Ovary (tissue), 10 donors: ENCODE measurements at regions of chr3 and their contacts with region 1.

Region 1: GRCh38 chr3:133040696-133041523 is 2.7 kb downstream of the TMEM108 start:
- DNase-seq: peak in 4 of 5 donors; percentile 9 to 40 (median 36)
- H3K4me3 ChIP-seq: no peak overlapping the region
- H3K27ac ChIP-seq: no peak overlapping the region
- H3K4me1 ChIP-seq: no peaks in the 10 kb centered on the region
- H3K27me3 ChIP-seq: no peaks in the 10 kb centered on the region
- CTCF ChIP-seq: peak in 1 of 3 donors; percentile 17
- EP300 ChIP-seq: no peak
- POLR2A ChIP-seq: no peak

Region 2: DNA sequence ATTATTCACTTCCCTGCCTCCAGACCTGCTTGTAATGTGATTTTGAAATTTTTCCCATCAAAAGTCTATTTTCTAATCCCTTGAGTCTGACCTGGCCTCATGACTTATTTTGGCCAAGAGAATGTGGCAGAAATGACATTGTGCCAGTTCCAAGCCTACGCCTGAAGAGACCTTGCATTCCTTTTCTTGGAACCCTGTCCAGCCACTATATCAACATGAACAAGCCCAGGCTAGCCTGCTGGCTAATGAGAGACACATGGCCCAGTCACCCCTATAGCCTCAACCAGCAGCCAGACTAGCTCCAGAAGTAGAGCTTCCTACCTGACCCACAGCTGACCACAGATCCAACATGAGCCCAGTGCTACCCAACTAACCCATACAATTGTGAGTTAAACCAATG is 844.8 kb before region 1 on chr3:
- intact Hi-C with region 1: no loop called
- DNase-seq: no peak
- H3K4me3 ChIP-seq: no peak overlapping the region
- H3K27ac ChIP-seq: no peak overlapping the region
- H3K4me1 ChIP-seq: no peaks in the 10 kb centered on the region
- H3K27me3 ChIP-seq: no peaks in the 10 kb centered on the region
- CTCF ChIP-seq: no peak
- EP300 ChIP-seq: no peak
- POLR2A ChIP-seq: no peak

Region 3: GRCh38 chr3:132800958-132801357 is 240.0 kb before region 1 on chr3:
- intact Hi-C with region 1: no loop called
- DNase-seq: no peak
- H3K4me3 ChIP-seq: no peak overlapping the region
- H3K27ac ChIP-seq: no peak overlapping the region
- H3K4me1 ChIP-seq: no peaks in the 10 kb centered on the region
- H3K27me3 ChIP-seq: no peaks in the 10 kb centered on the region
- CTCF ChIP-seq: no peak
- EP300 ChIP-seq: no peak
- POLR2A ChIP-seq: no peak

Region 4: GRCh38 chr3:132930916-132931315 is 110.0 kb before region 1 on chr3:
- intact Hi-C with region 1: no loop called
- DNase-seq: no peak
- H3K4me3 ChIP-seq: no peak overlapping the region
- H3K27ac ChIP-seq: no peak overlapping the region
- H3K4me1 ChIP-seq: no peaks in the 10 kb centered on the region
- H3K27me3 ChIP-seq: no peaks in the 10 kb centered on the region
- CTCF ChIP-seq: no peak
- EP300 ChIP-seq: no peak
- POLR2A ChIP-seq: no peak

Region 5: DNA sequence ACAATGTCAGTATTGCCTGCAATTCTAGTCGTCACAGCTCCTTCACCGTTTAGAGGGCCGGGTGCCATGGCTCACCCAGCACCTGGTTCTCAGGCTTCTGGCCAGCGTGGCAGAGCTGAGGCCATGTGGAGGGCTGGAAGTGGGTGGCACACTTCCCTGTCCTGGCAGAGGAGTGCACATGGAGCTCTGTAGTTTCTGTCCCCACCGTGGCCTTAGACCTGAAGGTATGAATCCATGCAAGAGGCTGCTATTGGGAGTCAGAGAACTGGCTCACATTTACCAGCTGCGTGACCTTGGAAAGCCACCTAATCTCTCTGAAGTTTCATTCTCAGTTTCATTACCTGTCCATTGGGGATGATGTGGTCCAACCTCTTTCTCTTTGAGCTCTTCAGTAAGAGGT is 1776.4 kb after region 1 on chr3:
- intact Hi-C with region 1: loop called in 1 of 4 experiments (anchors 5 kb)
- DNase-seq: no peak
- H3K4me3 ChIP-seq: no peak overlapping the region
- H3K27ac ChIP-seq: no peak overlapping the region
- H3K4me1 ChIP-seq: no peaks in the 10 kb centered on the region
- H3K27me3 ChIP-seq: no peaks in the 10 kb centered on the region
- CTCF ChIP-seq: no peak
- EP300 ChIP-seq: no peak
- POLR2A ChIP-seq: no peak